ENCODE measurements at regions of chr19 and their contacts with region 1.

Region 1: DNA sequence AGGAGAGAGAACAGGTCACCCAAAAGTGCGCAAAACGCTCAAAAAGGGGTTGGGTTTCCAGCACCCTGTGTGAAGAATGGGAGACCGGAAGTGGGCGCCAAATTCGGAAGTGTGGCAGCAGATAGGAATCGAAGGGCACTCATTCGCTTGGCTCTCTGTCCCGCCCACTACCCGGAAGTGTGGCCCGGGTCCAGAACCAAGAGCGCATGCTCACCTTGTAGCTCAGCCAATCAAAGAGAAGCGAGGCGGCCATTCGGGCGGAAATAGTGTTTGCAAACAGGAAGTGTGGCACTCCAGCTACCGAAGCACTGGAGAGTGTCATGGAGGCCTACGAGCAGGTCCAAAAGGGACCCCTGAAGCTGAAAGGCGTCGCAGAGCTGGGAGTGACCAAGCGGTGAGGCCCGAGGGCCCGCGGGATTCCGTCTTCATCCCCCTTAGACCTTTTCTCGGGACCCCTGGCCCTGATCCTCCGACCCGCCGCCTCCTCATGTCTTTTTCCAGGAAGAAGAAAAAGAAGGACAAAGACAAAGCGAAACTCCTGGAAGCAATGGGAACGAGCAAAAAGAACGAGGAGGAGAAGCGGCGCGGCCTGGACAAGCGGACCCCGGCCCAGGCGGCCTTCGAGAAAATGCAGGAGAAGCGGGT is at the start of gene FAM32A:
- DNase-seq: peak; percentile 94
- ATAC-seq: peak; percentile 88
- H3K4me3 Mint-ChIP-seq: peak within 1 kb of the TSS; percentile 97
- H3K27ac Mint-ChIP-seq: peak within 1 kb of the TSS; percentile 93
- H3K4me1 Mint-ChIP-seq: peaks cover 35% of the 10 kb centered on the region
- H3K27me3 Mint-ChIP-seq: no peaks in the 10 kb centered on the region
- CTCF ChIP-seq: no peak
- total RNA-seq, gene FAM32A: 52.2 and 53.5 TPM in 2 replicates

Region 2: GRCh38 chr19:15812060-15812682 is 373.1 kb before region 1 on chr19:
- CTCF ChIA-PET with region 1: interaction called, 4 read pairs
- POLR2A ChIA-PET with region 1: interaction called, 3 read pairs
- intact Hi-C with region 1: loop called (anchors 1 kb)
- DNase-seq: no peak
- ATAC-seq: no peak
- H3K4me3 Mint-ChIP-seq: no peak overlapping the region
- H3K27ac Mint-ChIP-seq: no peak overlapping the region
- H3K4me1 Mint-ChIP-seq: no peaks in the 10 kb centered on the region
- H3K27me3 Mint-ChIP-seq: peaks cover 40% of the 10 kb centered on the region
- CTCF ChIP-seq: no peak

Region 3: GRCh38 chr19:16062789-16063188 is 122.5 kb before region 1 on chr19:
- CTCF ChIA-PET with region 1: interaction called, 12 read pairs
- POLR2A ChIA-PET with region 1: interaction called, 7 read pairs
- intact Hi-C with region 1: loop called (anchors 1 kb)
- DNase-seq: peak; percentile 63
- ATAC-seq: peak; percentile 92
- H3K4me3 Mint-ChIP-seq: no peak overlapping the region
- H3K27ac Mint-ChIP-seq: no peak overlapping the region
- H3K4me1 Mint-ChIP-seq: peaks cover 10% of the 10 kb centered on the region
- H3K27me3 Mint-ChIP-seq: peaks cover 3% of the 10 kb centered on the region
- CTCF ChIP-seq: peak; percentile 80

Region 4: GRCh38 chr19:16111160-16111908 is 73.9 kb before region 1 on chr19 and contains the start of gene RAB8A:
- CTCF ChIA-PET with region 1: interaction called, 5 read pairs
- POLR2A ChIA-PET with region 1: interaction called, 16 read pairs
- intact Hi-C with region 1: loop called (anchors 1 kb)
- DNase-seq: peak; percentile 100
- ATAC-seq: peak; percentile 90
- H3K4me3 Mint-ChIP-seq: peak within 1 kb of the TSS; percentile 99
- H3K27ac Mint-ChIP-seq: peak within 1 kb of the TSS; percentile 97
- H3K4me1 Mint-ChIP-seq: peaks cover 46% of the 10 kb centered on the region
- H3K27me3 Mint-ChIP-seq: no peaks in the 10 kb centered on the region
- CTCF ChIP-seq: peak; percentile 73
- total RNA-seq, gene RAB8A: 157 and 171 TPM in 2 replicates

Region 5: DNA sequence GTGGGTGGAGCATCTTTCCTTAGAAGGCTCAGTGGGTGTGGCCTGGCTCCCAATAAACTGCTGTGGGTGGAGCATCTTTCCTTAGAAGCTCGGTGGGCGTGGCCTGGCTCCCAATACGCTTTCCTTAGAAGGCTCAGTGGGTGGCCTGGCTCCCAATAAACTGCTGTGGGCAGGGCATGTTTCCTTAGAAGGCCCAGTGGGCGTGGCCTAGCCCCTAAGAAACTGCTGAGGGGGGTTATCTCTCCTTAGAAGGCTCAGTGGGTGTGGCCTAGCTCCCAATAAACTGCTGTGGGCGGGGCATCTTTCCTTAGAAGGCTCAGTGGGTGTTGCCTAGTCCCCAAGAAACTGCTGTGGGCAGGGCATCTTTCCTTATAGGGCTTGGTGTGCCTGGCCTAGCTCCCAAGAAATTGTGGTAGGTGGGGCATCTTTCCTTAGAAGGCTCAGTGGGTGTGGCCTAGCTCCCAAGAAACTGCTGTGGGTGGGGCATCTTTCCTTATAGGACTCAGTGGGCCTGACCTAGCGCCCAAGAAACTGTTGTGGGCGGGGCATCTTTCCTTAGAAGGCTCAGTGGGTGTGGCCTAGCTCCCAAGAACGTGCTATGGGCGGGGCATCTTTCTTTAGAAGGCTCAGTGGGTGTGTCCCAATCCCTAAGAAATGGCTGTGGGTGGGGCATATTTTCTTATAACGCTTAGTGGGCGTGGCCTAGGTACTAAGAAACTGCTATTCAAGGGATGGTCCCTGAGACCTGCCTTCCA is 31.5 kb before region 1 on chr19:
- CTCF ChIA-PET with region 1: interaction called, 3 read pairs
- POLR2A ChIA-PET with region 1: interaction called, 10 read pairs
- intact Hi-C with region 1: no loop called
- DNase-seq: no peak
- ATAC-seq: no peak
- H3K4me3 Mint-ChIP-seq: no peak overlapping the region
- H3K27ac Mint-ChIP-seq: peak overlapping the region; percentile 30
- H3K4me1 Mint-ChIP-seq: peaks cover 59% of the 10 kb centered on the region
- H3K27me3 Mint-ChIP-seq: no peaks in the 10 kb centered on the region
- CTCF ChIP-seq: no peak

Region 6: GRCh38 chr19:16283210-16284061 is 98.2 kb after region 1 on chr19:
- CTCF ChIA-PET with region 1: no interaction called
- POLR2A ChIA-PET with region 1: no interaction called
- intact Hi-C with region 1: no loop called
- DNase-seq: peak; percentile 41
- ATAC-seq: peak; percentile 83
- H3K4me3 Mint-ChIP-seq: peak overlapping the region; percentile 66
- H3K27ac Mint-ChIP-seq: peak overlapping the region; percentile 78
- H3K4me1 Mint-ChIP-seq: peaks cover 51% of the 10 kb centered on the region
- H3K27me3 Mint-ChIP-seq: no peaks in the 10 kb centered on the region
- CTCF ChIP-seq: no peak

Region 7: GRCh38 chr19:16330368-16330801 is 145.1 kb after region 1 on chr19:
- CTCF ChIA-PET with region 1: no interaction called
- POLR2A ChIA-PET with region 1: interaction called, 13 read pairs
- intact Hi-C with region 1: no loop called
- DNase-seq: peak; percentile 70
- ATAC-seq: peak; percentile 77
- H3K4me3 Mint-ChIP-seq: peak overlapping the region; percentile 42
- H3K27ac Mint-ChIP-seq: peak overlapping the region; percentile 94
- H3K4me1 Mint-ChIP-seq: peaks cover 63% of the 10 kb centered on the region
- H3K27me3 Mint-ChIP-seq: no peaks in the 10 kb centered on the region
- CTCF ChIP-seq: no peak

Measured in activated B cell treated with CpG ODN at 0.5 μM for 24 hours (primary cell).